Dendritic cell treated with granulocyte-macrophage colony-stimulating factor and Interleukin-4, amounts not matched to agents 40 ng/mL and 50 ng/mL, for 4 days (primary cell): ENCODE measurements at regions of chr7 and their contacts with region 1.

Region 1: DNA sequence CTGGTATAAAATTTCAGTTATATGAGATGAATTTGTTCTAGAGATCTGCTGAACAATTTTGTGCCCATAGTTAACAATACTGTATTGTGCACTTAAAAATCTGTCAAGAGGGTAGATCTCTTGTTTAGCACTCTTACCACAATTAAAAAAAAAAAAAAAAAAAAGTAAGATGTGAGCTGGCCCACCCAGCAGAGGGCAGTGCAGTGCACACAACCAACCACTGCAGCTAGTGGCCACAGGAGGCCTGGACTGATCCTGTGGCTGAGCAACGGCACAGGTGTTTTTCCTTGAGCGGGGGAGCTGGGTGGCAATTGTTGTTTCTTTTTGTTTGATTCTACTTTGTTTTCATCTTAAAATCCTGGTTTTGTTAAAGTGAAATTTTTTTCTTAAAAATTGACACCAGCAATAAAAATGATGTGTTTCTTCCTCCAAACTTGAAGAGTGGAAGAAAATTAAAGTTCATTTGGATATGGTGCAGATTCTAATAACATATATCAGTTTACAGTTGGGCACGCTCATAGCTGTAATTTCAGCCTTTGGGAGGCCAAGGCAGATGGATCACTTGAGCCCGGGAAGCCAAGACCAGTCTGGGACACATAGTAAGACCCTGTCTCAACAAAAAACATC is 171.1 kb upstream of the TBX20 start:
- H3K4me3 Mint-ChIP-seq: no peak overlapping the region
- H3K27ac Mint-ChIP-seq: no peak overlapping the region
- H3K4me1 Mint-ChIP-seq: no peaks in the 10 kb centered on the region
- H3K27me3 Mint-ChIP-seq: peaks cover 4% of the 10 kb centered on the region

Region 2: DNA sequence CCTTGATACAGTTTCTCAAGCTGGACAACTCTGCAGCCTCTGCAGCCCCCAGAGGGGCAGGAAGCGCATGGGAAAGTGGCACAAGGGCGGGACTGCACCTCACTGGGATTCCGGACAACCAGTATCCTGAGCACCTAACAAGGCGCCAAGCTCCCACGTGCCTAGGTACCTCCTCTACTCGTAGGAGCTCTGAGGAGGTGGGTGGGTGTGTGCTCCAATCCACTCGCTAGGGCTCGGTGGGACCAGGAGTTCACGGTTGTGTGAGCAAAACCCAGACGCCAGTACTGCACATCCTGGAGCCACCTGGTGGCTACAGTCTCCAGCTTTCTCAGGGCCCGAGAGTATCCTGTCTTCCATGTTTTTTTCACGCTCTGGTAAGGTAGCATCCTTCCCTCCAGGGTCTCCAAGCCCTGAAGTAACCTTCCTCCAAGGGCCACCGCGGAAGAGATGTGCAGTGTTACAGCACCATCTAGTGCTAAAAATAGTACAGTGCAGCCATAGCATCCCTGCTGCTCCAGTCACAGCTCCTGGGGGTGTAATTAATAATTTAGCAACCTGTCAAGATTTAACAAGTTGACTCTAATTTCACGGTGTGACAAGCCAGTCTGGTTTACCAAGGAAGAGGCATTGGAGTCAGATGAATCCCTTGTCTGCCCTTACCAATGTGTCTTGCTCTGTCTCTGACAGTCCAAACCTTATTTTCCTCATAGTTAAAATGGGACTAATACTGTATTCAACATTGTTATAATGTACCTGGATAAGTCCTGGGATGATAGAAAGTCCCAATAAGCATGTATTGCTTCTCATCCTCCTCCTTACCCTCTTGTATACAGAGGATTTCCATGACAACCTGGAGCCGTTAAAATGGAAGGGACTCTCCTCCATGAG is 199.6 kb after region 1 on chr7:
- intact Hi-C with region 1: loop called (anchors 1 kb)
- H3K4me3 Mint-ChIP-seq: no peak overlapping the region
- H3K27ac Mint-ChIP-seq: no peak overlapping the region
- H3K4me1 Mint-ChIP-seq: no peaks in the 10 kb centered on the region
- H3K27me3 Mint-ChIP-seq: no peaks in the 10 kb centered on the region